Ascending aorta (tissue), 2 donors: ENCODE measurements at regions of chr5 and their contacts with region 1.

Region 1: DNA sequence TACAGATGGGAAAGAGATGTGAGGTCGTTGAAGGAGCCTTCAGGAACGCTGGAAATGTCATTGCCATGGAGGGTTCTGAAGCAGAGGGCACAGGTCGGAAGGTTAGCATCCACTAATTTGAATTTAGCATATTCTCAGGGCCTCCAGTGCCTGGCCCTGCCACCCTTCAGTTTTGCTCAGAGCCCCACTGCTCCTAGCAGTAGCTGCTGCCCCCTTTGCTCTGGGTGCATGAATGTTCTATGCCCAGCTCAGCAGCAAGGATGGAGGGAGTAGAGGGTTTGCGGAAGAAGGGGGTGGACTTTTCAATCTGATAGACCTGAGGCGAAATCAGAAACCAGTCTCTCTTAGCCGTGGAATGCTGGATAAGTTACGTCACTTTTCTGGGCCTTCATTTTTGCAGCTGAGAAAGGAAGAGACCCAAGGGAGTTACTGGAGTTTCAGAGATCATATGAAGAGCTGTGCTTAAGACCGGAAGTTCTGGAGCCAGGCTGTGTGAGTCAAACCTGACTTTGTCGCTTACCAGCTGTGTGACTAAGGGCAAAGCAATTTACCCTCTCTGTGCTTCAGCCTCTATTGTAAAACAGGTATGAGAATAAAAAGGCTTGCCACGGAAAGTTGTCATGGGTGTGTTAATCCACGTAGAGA is 133.2 kb upstream of the PANK3 start:
- DNase-seq: peak in 1 of 2 donors; percentile 84
- H3K4me3 ChIP-seq: no peak overlapping the region
- H3K27ac ChIP-seq: peak overlapping the region; percentile 67 to 75
- H3K4me1 ChIP-seq: peaks cover 0 to 9% of the 10 kb centered on the region in 2 donors
- H3K27me3 ChIP-seq: no peaks in the 10 kb centered on the region
- CTCF ChIP-seq: no peak

Region 2: GRCh38 chr5:168734620-168735300 is 22.4 kb after region 1 on chr5:
- intact Hi-C with region 1: loop called (anchors 2 kb)
- DNase-seq: peak; percentile 32 to 89
- H3K4me3 ChIP-seq: no peak overlapping the region
- H3K27ac ChIP-seq: peak overlapping the region; percentile 76 to 82
- H3K4me1 ChIP-seq: peaks cover 16 to 19% of the 10 kb centered on the region in 2 donors
- H3K27me3 ChIP-seq: no peaks in the 10 kb centered on the region
- CTCF ChIP-seq: no peak

Region 3: GRCh38 chr5:168765551-168766425 is 53.4 kb after region 1 on chr5:
- intact Hi-C with region 1: loop called (anchors 2 kb)
- DNase-seq: peak in 1 of 2 donors; percentile 75
- H3K4me3 ChIP-seq: peak overlapping the region in 1 of 2 donors; percentile 34
- H3K27ac ChIP-seq: peak overlapping the region; percentile 61 to 76
- H3K4me1 ChIP-seq: peaks cover 0 to 8% of the 10 kb centered on the region in 2 donors
- H3K27me3 ChIP-seq: no peaks in the 10 kb centered on the region
- CTCF ChIP-seq: no peak